ENCODE measurements at regions of chr1 and their contacts with region 1.

Region 1: DNA sequence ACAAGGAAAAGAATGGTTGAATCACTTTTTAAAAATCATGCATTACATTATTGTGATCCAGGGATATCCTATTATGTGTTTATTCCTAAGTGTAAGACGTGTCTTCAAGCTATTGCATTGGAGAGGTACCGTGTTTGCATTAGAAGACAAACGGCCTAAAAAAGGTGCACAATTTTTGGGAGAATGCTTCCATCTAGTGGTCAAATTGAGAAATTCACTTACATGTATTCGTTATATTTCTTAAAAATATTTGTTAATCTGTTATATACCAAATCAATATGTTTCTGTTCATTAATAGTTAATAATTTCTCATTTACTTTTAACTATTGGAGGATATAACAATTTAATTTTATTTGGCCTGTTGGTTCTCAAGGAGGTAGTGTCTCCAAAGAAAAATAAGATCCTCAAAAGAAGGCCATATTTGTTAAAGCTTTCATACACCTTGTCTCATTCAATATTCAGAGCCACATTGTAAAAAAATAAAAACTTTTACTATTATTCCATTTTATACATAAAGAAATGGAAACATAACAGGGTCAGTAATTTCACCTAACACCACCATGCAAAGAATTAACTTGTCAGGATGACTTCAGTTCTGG is 40.5 kb upstream of the KCTD3 start:
- DNase-seq: peak; percentile 68

Region 2: DNA sequence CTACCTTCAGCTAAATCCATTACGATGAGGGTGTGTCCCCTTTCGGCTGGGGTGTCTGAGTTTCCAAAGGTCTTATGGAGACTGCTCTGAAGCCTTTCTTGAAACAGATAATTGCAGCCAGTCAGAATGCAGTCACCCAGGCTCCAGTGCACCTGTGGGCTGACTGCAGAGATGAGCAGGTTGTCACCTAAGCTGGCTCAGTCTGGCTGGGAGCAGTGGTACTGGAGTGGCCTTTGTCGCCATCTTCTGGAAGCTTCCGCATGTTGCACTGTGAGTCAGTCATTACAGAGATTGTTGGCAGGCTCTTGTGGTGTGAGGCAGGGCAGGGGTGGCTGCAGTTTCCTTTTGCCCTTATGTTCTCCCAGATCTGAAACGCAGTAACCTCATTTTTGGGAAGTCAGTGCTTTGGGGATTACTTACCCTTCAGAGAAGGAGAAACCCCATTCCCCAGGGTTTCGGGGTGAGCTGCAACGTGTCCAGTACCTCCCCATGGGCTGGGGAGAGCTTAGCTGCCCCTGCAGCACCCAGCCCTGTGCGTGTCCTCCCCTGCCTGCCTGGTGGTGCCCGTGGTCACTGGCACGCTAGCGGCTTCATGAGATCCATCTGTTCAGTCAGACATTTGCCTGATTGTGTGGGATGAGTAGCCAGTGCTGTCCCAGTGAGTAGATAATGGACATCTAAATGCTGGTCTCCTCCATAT is 1197.7 kb before region 1 on chr1:
- in situ Hi-C with region 1: loop called (anchors 25 kb)
- DNase-seq: peak; percentile 90

Region 3: GRCh38 chr1:215497528-215497927 is 29.1 kb before region 1 on chr1:
- in situ Hi-C with region 1: no loop called
- DNase-seq: no peak

Region 4: DNA sequence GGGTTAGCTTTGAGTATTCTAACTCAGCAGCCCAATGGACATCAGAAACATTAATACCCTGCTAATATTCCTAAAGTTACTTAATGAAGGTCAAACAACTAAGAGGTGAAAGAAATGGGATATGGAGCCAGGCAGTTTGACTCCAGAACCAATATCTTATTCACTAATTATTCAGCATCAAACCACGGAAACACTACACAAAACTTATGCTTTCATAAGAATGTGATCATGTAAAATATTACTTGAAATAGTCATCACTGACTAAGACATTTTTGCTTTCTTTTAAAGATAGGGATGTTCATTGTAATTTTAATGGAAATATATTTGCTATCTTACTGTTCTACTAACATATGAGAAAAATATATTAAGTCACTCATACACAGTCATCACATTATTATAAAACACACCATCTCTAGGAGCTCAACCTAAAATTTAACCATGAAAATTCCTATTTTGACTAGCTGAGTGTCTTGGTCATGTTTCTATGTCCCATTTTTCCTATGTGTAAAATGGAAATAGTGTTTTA is 281.3 kb after region 1 on chr1:
- in situ Hi-C with region 1: no loop called
- DNase-seq: no peak

Region 5: DNA sequence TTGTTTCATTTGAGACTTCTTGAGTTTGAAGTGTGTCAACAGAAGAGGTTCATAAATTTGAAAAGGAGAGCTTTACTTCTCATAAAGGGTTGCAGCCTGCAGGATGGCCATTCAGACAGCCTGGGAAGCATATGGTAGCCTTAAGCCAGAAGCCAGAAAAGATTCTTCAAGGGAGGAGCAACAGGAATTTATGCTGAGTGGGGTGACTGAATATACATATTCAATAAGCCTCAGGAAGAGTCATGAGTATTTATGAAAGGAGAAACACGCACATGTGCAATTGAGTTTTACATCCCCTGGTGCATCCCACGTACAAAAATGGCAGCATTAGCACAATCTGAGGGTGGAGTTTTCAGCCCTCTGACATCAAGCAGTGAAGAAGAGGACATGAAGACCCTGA is 330.7 kb after region 1 on chr1:
- in situ Hi-C with region 1: no loop called
- DNase-seq: no peak